A673 (cell line): ENCODE measurements at regions of chr12 and their contacts with region 1.

Region 1: GRCh38 chr12:93751864-93752610 is 74.9 kb downstream of the CRADD start:
- DNase-seq: no peak
- H3K4me3 ChIP-seq: no peak overlapping the region
- H3K27ac ChIP-seq: no peak overlapping the region
- H3K4me1 ChIP-seq: no peaks in the 10 kb centered on the region
- H3K27me3 ChIP-seq: no peaks in the 10 kb centered on the region
- CTCF ChIP-seq: no peak

Region 2: DNA sequence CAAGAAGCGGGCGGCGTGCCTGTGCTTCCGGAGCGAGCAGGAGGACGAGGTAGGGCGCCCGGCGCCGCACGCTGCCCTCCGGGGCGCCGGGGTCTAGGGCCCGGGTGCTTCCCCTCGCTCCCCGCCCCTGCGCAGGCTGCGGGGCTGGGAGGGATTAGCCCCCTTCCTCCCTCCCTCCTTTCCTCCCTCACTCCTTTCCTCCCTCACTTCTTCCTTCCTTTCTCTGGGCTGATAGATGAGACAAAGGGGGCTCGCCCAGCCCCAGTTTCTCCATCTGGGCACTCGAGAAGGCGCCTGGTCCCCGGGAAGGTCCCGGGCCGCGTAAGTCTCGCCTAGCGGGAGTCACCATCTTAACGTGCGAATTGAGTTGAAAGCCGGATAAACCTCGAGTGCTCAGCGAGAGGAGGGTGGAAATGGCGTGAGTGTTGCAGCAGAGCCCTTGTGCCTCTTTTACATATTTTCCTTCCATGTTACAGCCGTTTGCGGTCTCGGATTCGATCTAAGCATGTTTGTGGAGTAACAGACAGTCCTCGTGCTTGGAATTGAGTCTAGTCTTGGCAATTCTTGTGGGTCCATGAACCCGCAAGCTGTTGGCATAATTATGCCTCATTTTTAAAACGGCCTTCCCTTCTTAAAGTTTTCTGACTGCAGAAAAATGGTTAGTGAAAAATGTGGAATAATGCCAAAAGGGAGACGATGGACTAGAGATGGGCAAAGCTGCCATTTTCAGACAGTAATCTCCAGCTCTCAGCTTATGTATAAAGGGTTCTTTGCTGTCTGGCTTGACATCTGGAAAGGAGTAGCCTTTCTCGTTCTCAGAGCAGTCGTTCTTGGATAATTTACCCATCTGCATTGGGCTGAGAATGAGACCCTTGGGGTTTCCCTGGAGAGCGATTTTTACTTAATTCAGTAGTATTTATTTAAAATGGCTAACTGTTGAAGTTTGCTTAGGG is 373.4 kb before region 1 on chr12:
- CTCF ChIA-PET with region 1: no interaction called
- POLR2A ChIA-PET with region 1: no interaction called
- intact Hi-C with region 1: no loop called
- DNase-seq: peak; percentile 70
- H3K4me3 ChIP-seq: peak overlapping the region; percentile 89
- H3K27ac ChIP-seq: peak overlapping the region; percentile 81
- H3K4me1 ChIP-seq: peaks cover 28% of the 10 kb centered on the region
- H3K27me3 ChIP-seq: no peaks in the 10 kb centered on the region
- CTCF ChIP-seq: no peak

Region 3: GRCh38 chr12:93624595-93625294 is 127.3 kb before region 1 on chr12:
- CTCF ChIA-PET with region 1: no interaction called
- POLR2A ChIA-PET with region 1: no interaction called
- intact Hi-C with region 1: no loop called
- DNase-seq: peak; percentile 59
- H3K4me3 ChIP-seq: no peak overlapping the region
- H3K27ac ChIP-seq: no peak overlapping the region
- H3K4me1 ChIP-seq: no peaks in the 10 kb centered on the region
- H3K27me3 ChIP-seq: no peaks in the 10 kb centered on the region
- CTCF ChIP-seq: no peak

Region 4: DNA sequence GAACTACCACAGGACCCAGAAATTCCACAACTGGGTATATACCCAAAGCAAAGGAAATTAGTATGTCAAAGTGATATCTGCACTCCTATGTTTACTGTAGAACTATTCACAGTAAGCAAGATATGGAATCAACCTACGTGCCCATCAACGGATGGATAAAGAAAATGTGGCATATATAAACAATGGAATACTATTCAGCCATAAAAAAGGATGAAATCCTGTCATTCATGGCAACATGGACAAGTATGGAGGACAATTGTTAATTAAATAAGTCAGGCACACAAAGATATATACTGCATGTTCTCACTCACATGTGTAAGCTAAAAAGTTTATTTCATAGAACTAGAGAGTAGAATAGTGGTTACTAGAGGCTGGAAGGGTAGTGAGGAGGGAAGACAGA is 610.6 kb after region 1 on chr12:
- CTCF ChIA-PET with region 1: no interaction called
- POLR2A ChIA-PET with region 1: no interaction called
- intact Hi-C with region 1: no loop called
- DNase-seq: no peak
- H3K4me3 ChIP-seq: no peak overlapping the region
- H3K27ac ChIP-seq: no peak overlapping the region
- H3K4me1 ChIP-seq: no peaks in the 10 kb centered on the region
- H3K27me3 ChIP-seq: no peaks in the 10 kb centered on the region
- CTCF ChIP-seq: no peak

Region 5: DNA sequence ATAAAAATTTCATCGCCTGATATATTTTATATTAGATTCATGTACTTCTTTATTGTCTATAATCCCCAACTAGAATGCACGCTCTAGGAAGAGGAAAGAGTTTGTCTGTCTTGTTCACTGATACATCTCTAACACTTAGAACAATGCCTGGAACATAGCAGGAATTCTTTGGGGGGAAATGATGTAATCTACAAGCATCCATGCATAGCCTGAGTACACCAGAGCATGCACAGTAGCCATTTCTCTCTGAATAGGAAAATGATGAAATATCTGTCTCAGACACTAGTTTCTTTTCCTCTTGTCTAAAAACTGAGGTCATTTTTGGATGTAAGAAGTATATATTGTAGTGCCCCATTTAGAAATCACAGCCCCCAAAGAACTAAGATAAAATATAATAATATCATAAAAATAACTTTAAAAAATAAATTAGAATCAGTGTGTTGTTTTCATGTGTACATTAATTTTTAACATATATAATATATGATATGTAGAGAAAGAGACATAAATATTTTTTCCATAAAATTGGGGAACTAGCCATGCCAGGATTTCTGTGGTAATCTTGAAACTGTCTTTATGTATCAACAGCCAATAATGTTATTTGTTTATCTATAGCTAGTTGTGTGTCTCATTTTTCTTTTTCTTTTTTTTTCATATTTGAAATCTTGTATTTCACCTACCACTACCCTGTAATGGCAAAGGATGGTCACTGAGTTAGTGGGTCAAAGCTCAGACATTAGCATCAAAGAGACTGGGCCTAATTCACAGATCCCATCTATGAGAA is 1053.9 kb after region 1 on chr12:
- CTCF ChIA-PET with region 1: no interaction called
- POLR2A ChIA-PET with region 1: interaction called, 17 read pairs
- intact Hi-C with region 1: no loop called
- DNase-seq: peak; percentile 64
- H3K4me3 ChIP-seq: no peak overlapping the region
- H3K27ac ChIP-seq: peak overlapping the region; percentile 45
- H3K4me1 ChIP-seq: peaks cover 6% of the 10 kb centered on the region
- H3K27me3 ChIP-seq: no peaks in the 10 kb centered on the region
- CTCF ChIP-seq: no peak